GM10248 (cell line): ENCODE measurements at regions of chr13 and their contacts with region 1.

Region 1: DNA sequence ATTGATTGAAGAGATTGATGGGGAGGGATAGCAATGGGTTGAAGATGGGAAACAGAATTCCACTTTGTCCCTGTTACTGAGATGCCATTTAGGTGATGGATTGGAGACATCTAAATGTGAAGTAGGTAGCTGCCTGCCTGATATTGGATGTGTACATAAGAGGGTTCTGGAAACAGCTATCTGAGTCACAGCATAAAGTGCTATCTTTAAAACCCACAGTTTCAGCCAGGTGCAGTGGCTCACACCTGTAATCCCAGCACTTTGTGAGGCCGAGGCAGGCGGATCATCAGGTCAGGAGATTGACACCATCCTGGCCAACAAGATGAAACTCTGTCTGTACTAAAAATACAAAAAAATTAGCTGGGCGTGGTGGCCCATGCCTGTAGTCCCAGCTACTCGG is 72.6 kb downstream of the DNAJC3 start:
- DNase-seq: no peak
- CTCF ChIP-seq: no peak

Region 2: DNA sequence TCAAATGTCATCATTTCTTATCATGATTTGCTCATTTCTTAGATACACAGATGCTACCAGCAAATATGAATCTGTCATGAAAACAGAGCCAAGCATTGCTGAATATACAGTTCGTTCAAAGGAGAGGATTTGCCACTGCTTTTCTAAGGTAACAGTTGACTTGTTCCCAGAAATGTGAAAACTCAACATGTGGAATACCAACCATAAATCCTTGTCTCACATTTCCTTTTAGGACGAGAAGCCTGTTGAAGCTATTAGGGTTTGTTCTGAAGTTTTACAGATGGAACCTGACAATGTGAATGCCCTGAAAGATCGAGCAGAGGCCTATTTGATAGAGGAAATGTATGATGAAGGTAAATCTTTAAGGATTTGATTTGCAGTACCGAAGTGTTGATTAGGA is 14.1 kb after region 1 on chr13:
- CTCF ChIA-PET with region 1: interaction called, 23 read pairs
- POLR2A ChIA-PET with region 1: no interaction called
- DNase-seq: no peak
- CTCF ChIP-seq: no peak